Stomach (tissue), 19 donors: ENCODE measurements at regions of chr19 and their contacts with region 1.

Region 1: GRCh38 chr19:11374433-11375142 is at the start of gene SWSAP1:
- DNase-seq: peak; percentile 98 to 100
- H3K4me3 ChIP-seq: peak within 1 kb of the TSS; percentile 40 to 67 (median 60)
- H3K27ac ChIP-seq: peak within 1 kb of the TSS; percentile 92 to 99 (median 96)
- H3K4me1 ChIP-seq: peaks cover 34 to 52% (median 47%) of the 10 kb centered on the region in 4 donors
- H3K27me3 ChIP-seq: no peaks in the 10 kb centered on the region
- CTCF ChIP-seq: peak in 1 of 7 experiments; percentile 8
- EP300 ChIP-seq: no peak
- POLR2A ChIP-seq: peak in 1 of 4 donors; percentile 10
- total RNA-seq, gene SWSAP1: 0.37 to 0.45 TPM in 2 of 5 donors, not detected in the others

Region 2: GRCh38 chr19:11434736-11435057 is 60.1 kb after region 1 on chr19:
- intact Hi-C with region 1: loop called (anchors 5 kb)
- DNase-seq: no peak
- H3K4me3 ChIP-seq: peak overlapping the region; percentile 73 to 88 (median 77)
- H3K27ac ChIP-seq: peak overlapping the region; percentile 83 to 90 (median 84)
- H3K4me1 ChIP-seq: peaks cover 15 to 27% (median 23%) of the 10 kb centered on the region in 4 donors
- H3K27me3 ChIP-seq: no peaks in the 10 kb centered on the region
- CTCF ChIP-seq: no peak
- EP300 ChIP-seq: no peak
- POLR2A ChIP-seq: no peak